Heart right ventricle (tissue), 16 donors: ENCODE measurements at regions of chr9 and their contacts with region 1.

Region 1: DNA sequence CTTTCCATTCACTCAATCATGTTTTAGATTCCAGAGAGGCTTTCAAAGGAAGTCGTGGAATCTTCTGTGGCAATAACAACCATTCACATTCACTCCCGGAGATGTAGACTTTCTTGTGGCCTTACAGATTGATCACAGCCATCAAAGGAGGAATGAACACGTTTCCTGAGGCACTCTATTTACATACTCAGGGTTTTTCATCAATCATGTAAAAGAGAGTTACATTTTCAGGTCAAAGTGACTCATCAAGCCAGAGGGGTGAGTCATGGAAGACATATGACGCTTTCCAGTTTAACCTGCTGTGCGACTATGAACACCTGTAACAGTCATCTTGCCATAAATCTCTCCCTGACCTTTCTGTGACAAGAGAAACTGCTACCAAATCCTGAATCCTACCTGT is 39.3 kb upstream of the RAD23B start:
- DNase-seq: no peak
- ATAC-seq: no peak
- H3K4me3 ChIP-seq: no peak overlapping the region
- H3K27ac ChIP-seq: no peak overlapping the region
- H3K4me1 ChIP-seq: peaks cover 0 to 3% (median 0%) of the 10 kb centered on the region in 9 donors
- H3K27me3 ChIP-seq: no peaks in the 10 kb centered on the region
- CTCF ChIP-seq: no peak

Region 2: GRCh38 chr9:107158321-107158720 is 85.4 kb before region 1 on chr9:
- intact Hi-C with region 1: no loop called
- DNase-seq: no peak
- ATAC-seq: peak in 4 of 8 donors; percentile 46 to 63 (median 54)
- H3K4me3 ChIP-seq: no peak overlapping the region
- H3K27ac ChIP-seq: no peak overlapping the region
- H3K4me1 ChIP-seq: no peaks in the 10 kb centered on the region
- H3K27me3 ChIP-seq: no peaks in the 10 kb centered on the region
- CTCF ChIP-seq: peak in 7 of 9 donors; percentile 23 to 50 (median 42)

Region 3: DNA sequence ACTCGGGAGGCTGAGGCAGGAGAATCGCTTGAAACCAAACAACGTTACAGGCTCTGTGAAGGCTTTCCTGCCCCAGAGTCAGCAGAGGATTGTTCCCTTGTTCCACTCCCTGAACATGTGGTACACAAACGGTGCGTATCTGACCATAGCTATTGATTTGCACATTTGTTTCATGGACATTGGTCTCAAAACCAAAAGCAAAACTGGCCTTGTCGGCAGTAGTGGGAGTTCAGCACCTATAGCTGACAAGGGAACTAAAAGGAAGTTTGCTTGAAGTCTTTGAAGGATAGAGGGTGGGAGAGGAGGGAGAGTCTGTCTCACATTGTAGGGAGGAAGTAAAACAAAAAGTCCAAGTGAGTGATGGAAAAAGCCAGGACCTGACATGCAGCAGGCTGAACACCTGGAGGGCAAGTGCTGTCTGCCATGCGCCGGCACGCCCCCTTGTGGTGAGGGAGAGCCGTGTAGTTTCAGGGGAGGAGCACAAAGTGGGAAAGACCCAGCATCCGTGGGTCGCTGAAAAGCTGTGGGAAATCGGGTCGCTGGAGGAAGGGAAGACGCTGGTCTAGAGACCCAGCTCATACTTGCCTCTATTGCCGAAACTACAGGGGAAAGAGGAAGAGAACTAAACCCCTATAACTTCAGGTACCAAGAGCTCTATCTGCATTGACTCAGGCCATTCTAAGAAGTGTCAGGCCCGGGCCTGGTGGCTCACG is 97.3 kb after region 1 on chr9:
- intact Hi-C with region 1: loop called in 8 of 10 experiments (anchors 1 to 10 kb)
- DNase-seq: peak; percentile 73 to 80
- ATAC-seq: peak; percentile 45 to 65 (median 58)
- H3K4me3 ChIP-seq: no peak overlapping the region
- H3K27ac ChIP-seq: no peak overlapping the region
- H3K4me1 ChIP-seq: peaks cover 0 to 40% (median 16%) of the 10 kb centered on the region in 9 donors
- H3K27me3 ChIP-seq: no peaks in the 10 kb centered on the region
- CTCF ChIP-seq: peak; percentile 83 to 93 (median 85)

Region 4: GRCh38 chr9:107409581-107410387 is 166.0 kb after region 1 on chr9:
- intact Hi-C with region 1: loop called in 1 of 10 experiments (anchors 10 kb)
- DNase-seq: no peak
- ATAC-seq: no peak
- H3K4me3 ChIP-seq: no peak overlapping the region
- H3K27ac ChIP-seq: no peak overlapping the region
- H3K4me1 ChIP-seq: no peaks in the 10 kb centered on the region
- H3K27me3 ChIP-seq: no peaks in the 10 kb centered on the region
- CTCF ChIP-seq: no peak